Motor neuron (in vitro differentiated cells): ENCODE measurements at regions of chr12 and their contacts with region 1.

Region 1: GRCh38 chr12:6285063-6285477 is 25.4 kb upstream of the PLEKHG6 start:
- ATAC-seq: peak; percentile 42 to 91 (median 80)
- H3K4me3 ChIP-seq: no peak overlapping the region
- H3K27ac ChIP-seq: no peak overlapping the region
- H3K4me1 ChIP-seq: peaks cover 6% of the 10 kb centered on the region in 2 donors

Region 2: DNA sequence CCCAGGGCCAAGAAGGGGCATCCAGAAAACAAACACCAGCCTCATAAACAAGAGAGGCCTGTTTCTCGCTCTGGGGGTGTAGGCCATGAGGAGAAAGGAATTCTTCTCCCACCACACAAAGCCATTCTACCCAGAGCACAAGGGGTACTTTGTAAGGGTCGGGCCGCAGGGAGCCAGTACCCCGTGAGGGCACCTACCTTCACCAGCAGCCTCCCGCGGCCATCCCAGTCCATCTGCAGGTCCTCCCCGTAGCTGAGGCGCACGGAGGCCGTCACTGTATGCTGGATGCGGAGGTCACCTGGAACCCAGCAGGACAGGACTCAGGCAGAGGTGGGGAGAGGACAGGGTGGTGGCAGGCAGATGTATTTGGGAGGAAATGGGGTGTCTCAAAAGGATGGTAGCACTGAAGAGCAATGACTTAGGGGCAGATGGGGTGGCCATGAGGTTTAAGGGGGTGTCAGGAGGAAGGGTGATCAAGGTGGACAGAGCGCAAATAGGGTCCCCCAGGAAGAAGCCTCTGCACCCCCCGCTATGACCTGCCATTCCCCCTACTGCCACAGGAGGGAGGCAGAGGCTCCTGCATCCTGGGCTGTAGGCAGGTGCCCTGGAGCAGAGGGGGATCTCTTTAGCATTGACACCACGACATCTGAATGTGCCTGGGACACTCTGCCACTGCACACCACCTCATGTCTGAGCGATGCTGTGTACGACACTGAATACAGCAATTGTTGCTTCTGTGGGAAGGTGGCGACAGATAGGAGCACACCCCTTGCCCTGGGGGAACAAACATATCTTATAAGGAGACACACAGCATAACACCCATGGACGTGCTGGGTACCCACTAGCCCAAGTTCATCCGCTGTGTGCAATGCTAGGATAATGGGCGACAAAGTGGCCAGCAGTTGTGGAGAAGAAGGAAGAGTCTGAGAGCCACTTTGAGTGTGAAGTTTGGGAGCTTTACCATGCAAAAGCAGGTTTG is 222.0 kb before region 1 on chr12:
- in situ Hi-C with region 1: loop called in 8 of 9 experiments (anchors 10 to 25 kb)
- ATAC-seq: peak; percentile 53 to 96 (median 86)
- H3K4me3 ChIP-seq: no peak overlapping the region
- H3K27ac ChIP-seq: no peak overlapping the region
- H3K4me1 ChIP-seq: no peaks in the 10 kb centered on the region